H1 (cell line): ENCODE measurements at regions of chr14 and their contacts with region 1.

Region 1: DNA sequence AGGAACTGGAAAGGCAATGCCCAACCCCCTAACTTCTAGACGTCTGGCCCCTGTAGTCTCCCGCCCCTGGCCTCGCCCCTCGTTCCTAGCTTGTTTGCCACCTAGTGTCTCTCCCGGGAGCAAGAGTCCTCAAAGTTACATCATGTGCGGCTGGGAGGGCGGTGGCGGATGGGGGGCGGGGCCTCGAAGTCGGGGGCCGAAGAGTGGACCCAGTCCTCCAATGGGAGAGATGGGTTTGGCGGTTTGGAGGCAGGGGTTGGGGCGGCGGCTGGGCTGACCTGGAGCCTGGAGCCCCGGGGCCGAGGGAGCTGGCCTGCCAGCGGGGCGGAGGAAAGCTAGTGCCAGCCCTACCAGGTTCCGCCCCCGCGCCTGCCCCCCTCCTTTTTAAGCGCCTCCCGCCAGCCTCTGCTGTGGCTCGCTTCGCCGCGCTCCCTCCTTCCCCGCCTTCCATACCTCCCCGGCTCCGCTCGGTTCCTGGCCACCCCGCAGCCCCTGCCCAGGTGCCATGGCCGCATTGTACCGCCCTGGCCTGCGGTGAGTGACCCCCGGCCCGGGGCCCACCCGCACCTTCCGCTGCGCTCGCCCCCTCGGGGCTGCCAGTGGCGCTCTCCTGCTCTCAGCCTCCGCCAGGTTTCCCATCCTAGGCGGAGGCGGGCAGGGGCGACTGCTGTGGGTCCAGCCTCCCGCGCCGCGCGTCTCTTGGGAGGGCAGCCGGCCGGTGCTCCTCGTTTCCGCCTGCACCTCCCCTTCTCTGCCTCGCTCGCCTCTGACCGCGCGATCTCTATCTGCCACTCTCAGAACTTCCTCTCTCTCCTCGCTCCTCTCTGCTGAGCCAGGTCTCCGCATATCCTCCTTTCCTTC is at the start of gene PCK2:
- DNase-seq: peak; percentile 93 to 95
- H3K4me3 ChIP-seq: peak within 1 kb of the TSS; percentile 60 to 96 (median 84)
- H3K27ac ChIP-seq: peak within 1 kb of the TSS; percentile 89
- H3K4me1 ChIP-seq: peaks cover 5 to 13% (median 9%) of the 10 kb centered on the region in 4 experiments
- H3K27me3 ChIP-seq: no peaks in the 10 kb centered on the region
- CTCF ChIP-seq: no peak
- EP300 ChIP-seq: peak in 1 of 2 experiments; percentile 80; a peak in 1 of 3 replicates
- POLR2A ChIP-seq: peak; percentile 87 to 97
- RAD21 ChIP-seq: no peak
- total RNA-seq, gene PCK2: 79.3 and 81.9 TPM in 2 replicates

Region 2: DNA sequence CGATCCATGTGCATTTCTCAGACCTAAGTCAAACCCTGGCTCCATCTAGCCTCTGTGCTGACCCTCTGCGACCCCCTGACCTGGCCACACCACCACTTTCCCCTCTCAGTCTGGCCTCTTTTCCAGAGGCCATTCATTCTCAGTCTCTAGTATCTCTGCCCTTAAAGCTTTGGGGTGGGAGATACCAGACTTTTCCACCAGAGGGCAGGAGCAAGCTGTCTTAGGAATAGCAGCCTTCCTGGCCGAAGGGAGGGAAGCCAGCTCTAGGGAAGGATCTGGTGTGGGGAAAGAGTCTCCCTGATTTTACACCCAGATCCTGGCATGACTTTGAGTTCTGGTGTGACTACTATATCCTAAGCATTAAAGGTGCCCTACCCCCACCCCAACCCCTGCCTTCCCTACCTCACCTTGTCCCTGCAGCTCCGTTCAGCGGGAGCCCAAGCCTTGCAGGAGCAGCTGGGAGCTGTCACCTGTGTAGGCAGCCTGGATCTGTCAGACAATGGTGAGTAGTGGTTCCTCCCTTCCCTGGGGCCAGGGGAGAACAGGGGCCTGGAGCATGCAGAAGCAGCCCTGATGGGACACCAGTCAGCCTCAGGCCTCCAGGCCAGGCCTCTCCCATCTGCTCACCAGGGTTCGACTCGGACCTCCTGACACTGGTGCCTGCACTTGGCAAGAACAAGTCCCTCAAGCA is 35.7 kb before region 1 on chr14:
- CTCF ChIA-PET with region 1: interaction called, 316 read pairs
- POLR2A ChIA-PET with region 1: interaction called, 626 read pairs
- DNase-seq: peak in 1 of 2 experiments; percentile 84
- H3K4me3 ChIP-seq: no peak overlapping the region
- H3K27ac ChIP-seq: no peak overlapping the region
- H3K4me1 ChIP-seq: 0 out of 7 replicates have a peak, but pooled peaks cover 0 to 2% (median 0%) of the 10 kb centered on the region in 4 experiments
- H3K27me3 ChIP-seq: no peaks in the 10 kb centered on the region
- CTCF ChIP-seq: peak in 2 of 3 experiments; percentile 84 to 93; a peak in 3 of 4 replicates
- EP300 ChIP-seq: no peak
- POLR2A ChIP-seq: no peak
- RAD21 ChIP-seq: peak; percentile 93 to 97

Region 3: DNA sequence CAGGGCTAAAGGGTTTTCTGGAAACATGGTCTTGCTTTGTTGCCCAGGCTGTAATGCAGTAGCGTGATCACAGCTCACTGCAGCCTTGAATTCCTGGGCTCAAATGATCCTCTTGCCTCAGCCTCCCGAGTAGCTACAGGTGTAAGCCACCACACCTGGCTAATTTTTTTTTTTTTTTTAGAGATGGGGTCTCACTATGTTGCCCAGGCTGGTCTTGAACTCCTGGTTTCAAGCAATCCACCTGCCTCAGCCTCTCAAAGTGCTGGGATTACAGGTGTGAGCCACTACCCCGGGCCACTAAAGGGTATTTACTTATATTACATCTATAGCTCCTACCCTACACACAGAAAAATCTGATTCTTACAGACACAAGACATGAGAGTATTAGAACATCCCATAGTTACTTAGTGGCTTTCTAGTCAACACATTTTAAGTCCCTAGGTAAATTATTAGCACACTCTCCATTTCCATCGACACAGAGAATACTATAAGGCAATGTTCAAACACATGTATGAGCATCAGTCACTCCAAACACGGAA is 14.3 kb after region 1 on chr14:
- CTCF ChIA-PET with region 1: interaction called, 160 read pairs
- POLR2A ChIA-PET with region 1: interaction called, 259 read pairs
- DNase-seq: no peak
- H3K4me3 ChIP-seq: no peak overlapping the region
- H3K27ac ChIP-seq: no peak overlapping the region
- H3K4me1 ChIP-seq: no peaks in the 10 kb centered on the region
- H3K27me3 ChIP-seq: no peaks in the 10 kb centered on the region
- CTCF ChIP-seq: no peak
- EP300 ChIP-seq: no peak
- POLR2A ChIP-seq: no peak
- RAD21 ChIP-seq: no peak

Region 4: DNA sequence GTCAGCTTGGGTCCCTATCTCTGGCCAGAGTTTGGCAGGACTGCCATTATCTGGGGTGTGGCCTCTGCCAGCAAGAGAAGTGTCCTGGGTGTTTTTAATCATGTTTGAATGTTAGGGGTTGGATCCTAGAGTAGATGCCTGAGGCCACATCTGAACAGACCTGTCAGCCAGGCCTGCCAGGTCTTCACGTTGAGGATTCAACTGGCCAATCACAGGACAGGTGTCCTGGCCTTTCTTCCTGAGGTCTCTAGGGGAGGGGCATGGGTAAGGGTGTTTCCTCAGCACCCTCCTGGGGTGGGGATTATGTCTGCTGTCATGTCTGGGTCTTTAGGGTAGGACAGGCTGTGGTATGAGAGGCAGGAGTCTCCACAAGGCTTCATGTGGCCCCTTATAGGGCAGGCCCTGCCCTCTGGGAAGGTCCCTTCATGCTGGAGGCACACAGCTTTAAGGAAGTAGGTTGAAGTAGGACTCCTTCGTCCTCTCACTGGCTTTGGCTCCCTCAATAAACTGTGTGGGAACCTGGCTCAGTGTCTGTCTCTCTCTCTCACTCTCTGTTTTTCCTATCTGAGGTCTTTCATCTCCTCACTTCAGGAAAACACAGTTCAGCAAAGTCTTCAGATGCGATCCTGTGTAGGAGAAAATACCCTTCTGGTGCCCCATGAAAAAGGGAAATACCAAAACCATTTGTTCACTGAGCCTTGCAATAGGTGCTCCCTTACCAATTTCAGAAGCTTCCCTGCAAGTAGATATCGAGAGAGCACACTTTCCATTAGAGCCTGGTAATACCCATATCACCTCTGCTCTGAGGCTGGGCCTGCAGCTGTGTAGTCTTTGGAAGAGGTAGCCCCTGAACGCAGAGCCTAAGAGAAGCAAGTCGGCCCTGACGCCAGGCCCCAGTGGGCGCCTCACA is 29.6 kb after region 1 on chr14:
- CTCF ChIA-PET with region 1: interaction called, 10 read pairs
- POLR2A ChIA-PET with region 1: interaction called, 125 read pairs
- DNase-seq: no peak
- H3K4me3 ChIP-seq: no peak overlapping the region
- H3K27ac ChIP-seq: no peak overlapping the region
- H3K4me1 ChIP-seq: no peaks in the 10 kb centered on the region
- H3K27me3 ChIP-seq: no peaks in the 10 kb centered on the region
- CTCF ChIP-seq: no peak
- EP300 ChIP-seq: no peak
- POLR2A ChIP-seq: no peak
- RAD21 ChIP-seq: no peak

Region 5: DNA sequence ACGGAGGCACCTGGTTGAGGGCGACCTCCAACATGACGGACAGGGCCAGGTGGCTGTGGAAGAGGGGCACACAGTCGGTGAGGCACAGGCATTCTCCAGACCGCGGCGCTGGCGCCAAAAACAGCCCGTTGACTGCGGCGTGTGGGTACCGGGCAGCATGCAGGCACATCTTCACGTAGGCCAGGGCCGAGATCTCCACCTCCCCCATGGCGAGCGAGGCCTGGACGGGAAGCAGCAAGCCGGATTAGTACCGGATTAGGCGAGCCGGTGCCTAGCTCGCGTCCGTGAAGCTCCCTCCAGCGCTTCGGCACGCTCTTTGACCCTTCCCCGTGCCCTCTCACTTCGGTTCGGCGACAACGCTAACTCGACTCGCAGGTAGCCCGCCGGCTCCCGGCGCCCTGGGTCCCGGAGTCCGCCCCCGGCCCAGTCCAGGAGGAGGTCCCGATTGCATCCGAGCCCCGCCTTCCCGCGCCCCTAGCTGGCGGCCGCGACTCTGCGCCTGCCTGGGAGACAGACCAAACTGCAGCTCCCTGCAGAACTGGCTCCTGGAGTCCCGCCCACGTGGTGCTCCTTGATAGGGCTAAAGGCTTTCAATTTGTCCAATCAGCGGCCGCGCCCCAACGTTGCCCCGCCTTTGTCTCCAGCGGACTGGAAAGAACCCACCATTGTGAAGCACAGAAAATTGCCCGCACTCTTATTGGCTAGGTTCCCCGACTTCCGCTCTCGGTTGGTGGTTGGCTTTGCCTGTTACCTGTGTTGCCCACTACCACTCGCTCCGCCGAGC is 47.2 kb after region 1 on chr14 and contains the start of gene EMC9:
- CTCF ChIA-PET with region 1: interaction called, 4 read pairs
- POLR2A ChIA-PET with region 1: interaction called, 29 read pairs
- DNase-seq: peak; percentile 98 to 100
- H3K4me3 ChIP-seq: peak within 1 kb of the TSS; percentile 79 to 99 (median 94)
- H3K27ac ChIP-seq: peak within 1 kb of the TSS; percentile 92
- H3K4me1 ChIP-seq: peaks cover 4 to 13% (median 7%) of the 10 kb centered on the region in 4 experiments; a peak in 6 of 7 replicates
- H3K27me3 ChIP-seq: no peaks in the 10 kb centered on the region
- CTCF ChIP-seq: peak; percentile 23 to 48 (median 26); a peak in 3 of 4 replicates
- EP300 ChIP-seq: no peak
- POLR2A ChIP-seq: peak; percentile 81 to 84
- RAD21 ChIP-seq: no peak
- total RNA-seq, gene EMC9: 36.9 and 38.4 TPM in 2 replicates

Region 6: DNA sequence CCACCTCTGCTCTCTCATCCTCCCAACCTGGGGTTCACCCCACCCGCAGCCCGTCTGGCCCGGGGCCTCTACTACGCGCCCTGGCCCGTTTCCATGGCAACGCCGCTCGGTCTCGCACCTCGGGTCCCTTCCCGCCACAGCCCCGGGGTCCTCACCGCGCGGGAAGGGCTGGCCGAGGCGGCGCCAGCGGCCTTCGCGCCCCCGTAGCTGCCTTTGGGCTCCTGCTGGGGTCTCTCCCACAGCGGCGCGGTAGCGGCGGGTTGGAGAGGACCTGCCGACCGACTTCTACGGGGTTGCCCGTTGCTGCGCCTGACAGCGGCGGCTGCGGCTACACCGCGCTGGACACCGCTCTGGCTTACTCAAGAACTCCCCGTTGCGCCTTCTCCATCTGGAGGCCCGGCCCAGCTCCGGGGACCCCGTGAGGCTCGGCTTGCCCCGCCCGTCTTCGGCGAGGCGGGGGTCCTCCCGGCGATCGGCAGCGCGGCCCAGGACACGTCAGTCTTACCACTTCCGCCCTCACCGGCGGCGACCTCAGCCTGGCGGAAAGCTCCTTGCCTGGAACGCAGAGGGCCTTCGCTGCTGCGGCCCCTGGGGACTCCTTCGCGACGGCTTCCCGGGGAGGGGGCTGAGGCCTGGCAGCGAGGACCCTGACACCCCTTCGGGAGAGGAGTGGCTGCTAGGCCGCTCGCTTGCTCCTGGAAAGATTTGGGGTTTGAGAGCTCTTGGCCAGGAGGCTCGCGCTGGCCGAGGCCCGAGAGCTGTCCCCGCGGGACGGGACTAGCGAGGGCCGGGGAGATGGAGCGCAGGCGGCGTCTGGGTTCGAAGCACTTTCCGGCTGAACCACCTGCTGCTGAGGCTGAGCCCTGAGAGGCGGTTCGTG is 101.3 kb after region 1 on chr14 and contains the start of gene TM9SF1:
- CTCF ChIA-PET with region 1: interaction called, 5 read pairs
- POLR2A ChIA-PET with region 1: interaction called, 12 read pairs
- DNase-seq: peak; percentile 83 to 93
- H3K4me3 ChIP-seq: peak within 1 kb of the TSS; percentile 65 to 88 (median 84)
- H3K27ac ChIP-seq: peak within 1 kb of the TSS; percentile 95
- H3K4me1 ChIP-seq: peaks cover 0 to 9% (median 3%) of the 10 kb centered on the region in 4 experiments; a peak in 3 of 7 replicates
- H3K27me3 ChIP-seq: no peaks in the 10 kb centered on the region
- CTCF ChIP-seq: peak in 1 of 3 experiments; percentile 8; a peak in 1 of 4 replicates
- EP300 ChIP-seq: no peak
- POLR2A ChIP-seq: peak; percentile 7 to 61; a peak in 2 of 3 replicates
- RAD21 ChIP-seq: no peak
- total RNA-seq, gene TM9SF1: 22.2 and 25.3 TPM in 2 replicates

Region 7: DNA sequence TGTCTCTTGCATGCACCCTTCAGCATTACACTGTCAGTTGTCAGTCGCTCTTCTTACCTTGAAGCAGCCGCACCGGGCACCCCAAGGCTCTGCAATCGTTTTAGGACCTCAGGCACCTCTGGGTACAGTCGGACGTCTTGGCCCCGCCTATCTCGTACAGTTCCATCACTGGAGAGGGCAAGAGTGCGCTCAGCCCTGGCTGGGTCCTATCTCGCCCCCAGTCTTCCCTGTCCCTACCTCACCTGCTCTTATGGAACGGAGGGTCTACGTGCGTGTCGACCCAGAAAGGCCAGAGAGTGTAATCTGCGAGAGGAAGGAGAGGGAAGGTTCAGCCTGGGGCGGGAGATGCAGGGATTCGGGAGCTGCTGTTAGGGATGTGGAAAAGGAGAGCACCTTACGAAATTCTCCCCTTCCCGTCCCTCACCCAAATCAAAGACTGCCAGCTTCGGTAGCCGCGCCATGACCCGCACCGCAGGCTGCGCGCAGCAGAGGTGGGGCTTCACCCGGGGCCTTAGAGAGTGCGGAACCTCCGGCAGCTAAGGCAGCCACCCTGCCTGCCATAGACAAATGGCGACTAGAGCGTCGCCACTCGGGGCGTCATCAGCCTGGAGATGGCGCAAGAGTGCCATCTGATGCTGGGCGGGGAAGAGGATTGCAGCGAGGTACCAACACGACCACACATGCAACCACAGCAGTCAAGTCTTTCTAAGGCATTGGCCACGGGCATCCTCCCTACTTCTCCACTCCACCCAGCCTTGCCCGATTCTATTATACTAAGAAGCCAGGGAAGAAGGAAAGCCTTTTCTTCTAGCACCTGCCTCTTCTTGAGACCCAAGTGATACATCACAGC is 121.6 kb after region 1 on chr14 and contains the start of gene MDP1:
- CTCF ChIA-PET with region 1: no interaction called
- POLR2A ChIA-PET with region 1: no interaction called
- DNase-seq: peak; percentile 73 to 82
- H3K4me3 ChIP-seq: peak within 1 kb of the TSS; percentile 77 to 94 (median 84)
- H3K27ac ChIP-seq: peak within 1 kb of the TSS; percentile 72
- H3K4me1 ChIP-seq: peaks cover 0 to 5% (median 2%) of the 10 kb centered on the region in 4 experiments; a peak in 1 of 7 replicates
- H3K27me3 ChIP-seq: no peaks in the 10 kb centered on the region
- CTCF ChIP-seq: peak; percentile 77 to 95 (median 92)
- EP300 ChIP-seq: no peak
- POLR2A ChIP-seq: peak; percentile 87 to 95
- RAD21 ChIP-seq: peak; percentile 65 to 73
- total RNA-seq, gene MDP1: 14.3 and 17.7 TPM in 2 replicates